ENCODE measurements at regions of chr4 and their contacts with region 1.

Region 1: GRCh38 chr4:113593400-113594230 is 167.9 kb downstream of the CAMK2D start:
- DNase-seq: no peak
- ATAC-seq: peak; percentile 85
- H3K4me3 Mint-ChIP-seq: peak overlapping the region; percentile 46
- H3K27ac Mint-ChIP-seq: peak overlapping the region; percentile 90
- H3K4me1 Mint-ChIP-seq: peaks cover 85% of the 10 kb centered on the region
- H3K27me3 Mint-ChIP-seq: no peaks in the 10 kb centered on the region
- CTCF ChIP-seq: no peak

Region 2: DNA sequence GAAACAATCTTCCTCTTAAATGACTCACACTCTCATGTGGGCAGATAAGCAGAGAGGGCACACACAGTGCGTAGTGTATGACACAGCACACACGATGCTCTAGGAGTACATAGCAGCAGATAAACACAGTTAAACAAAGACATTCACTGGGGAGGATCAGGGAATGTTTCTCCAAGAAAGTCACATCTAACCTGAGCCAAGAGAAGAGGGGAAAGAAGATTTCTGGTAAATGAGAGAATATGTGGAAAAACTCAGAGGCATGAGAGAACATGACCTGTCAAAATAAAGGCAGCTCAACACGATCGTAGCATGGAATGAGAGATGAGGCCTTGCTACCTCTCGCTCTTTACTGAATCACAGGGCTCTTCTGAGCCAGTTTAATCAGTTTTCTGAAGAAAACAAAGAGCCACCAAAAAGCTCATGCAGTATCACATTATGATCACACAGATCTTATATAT is 293.1 kb before region 1 on chr4:
- CTCF ChIA-PET with region 1: no interaction called
- POLR2A ChIA-PET with region 1: no interaction called
- intact Hi-C with region 1: no loop called
- DNase-seq: no peak
- ATAC-seq: no peak
- H3K4me3 Mint-ChIP-seq: no peak overlapping the region
- H3K27ac Mint-ChIP-seq: no peak overlapping the region
- H3K4me1 Mint-ChIP-seq: no peaks in the 10 kb centered on the region
- H3K27me3 Mint-ChIP-seq: no peaks in the 10 kb centered on the region
- CTCF ChIP-seq: no peak

Region 3: DNA sequence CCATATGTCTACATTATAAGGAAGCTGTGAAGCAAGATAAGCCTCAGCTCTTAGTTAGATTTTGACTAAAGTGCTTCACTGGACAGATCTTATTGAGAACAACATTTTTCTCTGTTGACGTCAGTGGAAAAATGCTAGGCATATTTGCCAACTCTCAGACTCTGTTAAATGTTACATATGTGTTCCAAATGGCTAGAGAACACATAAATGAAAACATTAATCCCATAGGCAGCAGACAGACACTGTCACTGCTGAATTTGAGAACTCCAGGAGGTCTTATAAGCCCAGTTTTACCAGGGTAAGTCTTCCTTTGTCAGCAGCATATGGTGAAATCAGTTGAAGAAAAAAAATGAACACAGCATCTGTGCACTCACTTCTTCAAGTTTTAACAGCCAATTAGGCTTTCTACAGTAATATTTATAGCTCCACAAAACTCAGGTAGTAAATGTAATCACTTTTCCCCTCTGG is 18.9 kb before region 1 on chr4:
- CTCF ChIA-PET with region 1: no interaction called
- POLR2A ChIA-PET with region 1: interaction called, 4 read pairs
- intact Hi-C with region 1: loop called (anchors 1 kb)
- DNase-seq: no peak
- ATAC-seq: peak; percentile 47
- H3K4me3 Mint-ChIP-seq: no peak overlapping the region
- H3K27ac Mint-ChIP-seq: peak overlapping the region; percentile 51
- H3K4me1 Mint-ChIP-seq: peaks cover 90% of the 10 kb centered on the region
- H3K27me3 Mint-ChIP-seq: no peaks in the 10 kb centered on the region
- CTCF ChIP-seq: no peak

Region 4: GRCh38 chr4:113607998-113608397 is 14.4 kb after region 1 on chr4:
- CTCF ChIA-PET with region 1: interaction called, 4 read pairs
- POLR2A ChIA-PET with region 1: interaction called, 4 read pairs
- intact Hi-C with region 1: loop called (anchors 2 kb)
- DNase-seq: no peak
- ATAC-seq: no peak
- H3K4me3 Mint-ChIP-seq: no peak overlapping the region
- H3K27ac Mint-ChIP-seq: peak overlapping the region; percentile 71
- H3K4me1 Mint-ChIP-seq: peaks cover 70% of the 10 kb centered on the region
- H3K27me3 Mint-ChIP-seq: no peaks in the 10 kb centered on the region
- CTCF ChIP-seq: no peak

Region 5: DNA sequence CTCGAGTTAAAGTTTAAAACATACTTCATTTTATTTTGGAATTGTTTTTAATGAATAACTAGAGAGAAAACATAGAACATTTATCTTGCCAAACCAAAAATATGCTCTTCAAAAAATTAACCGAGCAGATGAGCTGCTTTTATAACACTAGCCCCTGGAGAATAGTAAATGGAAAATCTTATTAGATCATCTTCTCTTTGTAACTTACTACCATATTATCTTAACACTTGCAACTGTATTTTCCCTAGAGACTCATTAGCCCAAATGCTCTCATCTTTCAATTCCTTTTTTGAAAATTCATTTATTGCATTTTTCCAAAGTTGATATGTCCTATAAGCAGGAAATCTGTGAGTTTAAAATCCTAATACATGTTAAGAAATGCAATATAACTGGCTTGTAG is 24.6 kb after region 1 on chr4:
- CTCF ChIA-PET with region 1: no interaction called
- POLR2A ChIA-PET with region 1: interaction called, 5 read pairs
- intact Hi-C with region 1: loop called (anchors 2 kb)
- DNase-seq: no peak
- ATAC-seq: peak; percentile 83
- H3K4me3 Mint-ChIP-seq: no peak overlapping the region
- H3K27ac Mint-ChIP-seq: no peak overlapping the region
- H3K4me1 Mint-ChIP-seq: peaks cover 48% of the 10 kb centered on the region
- H3K27me3 Mint-ChIP-seq: no peaks in the 10 kb centered on the region
- CTCF ChIP-seq: no peak

Region 6: GRCh38 chr4:114334884-114335330 is 741.3 kb after region 1 on chr4:
- CTCF ChIA-PET with region 1: no interaction called
- POLR2A ChIA-PET with region 1: no interaction called
- intact Hi-C with region 1: no loop called
- DNase-seq: no peak
- ATAC-seq: no peak
- H3K4me3 Mint-ChIP-seq: no peak overlapping the region
- H3K27ac Mint-ChIP-seq: no peak overlapping the region
- H3K4me1 Mint-ChIP-seq: no peaks in the 10 kb centered on the region
- H3K27me3 Mint-ChIP-seq: peaks cover 2% of the 10 kb centered on the region
- CTCF ChIP-seq: no peak